ENCODE measurements at regions of chr2 and their contacts with region 1.

Region 1: GRCh38 chr2:28423856-28424605 is 31.4 kb downstream of the FOSL2 start:
- DNase-seq: no peak
- H3K4me3 Mint-ChIP-seq: peak overlapping the region; percentile 34
- H3K27ac Mint-ChIP-seq: peak overlapping the region; percentile 85
- H3K4me1 Mint-ChIP-seq: peaks cover 45% of the 10 kb centered on the region
- H3K27me3 Mint-ChIP-seq: no peaks in the 10 kb centered on the region

Region 2: DNA sequence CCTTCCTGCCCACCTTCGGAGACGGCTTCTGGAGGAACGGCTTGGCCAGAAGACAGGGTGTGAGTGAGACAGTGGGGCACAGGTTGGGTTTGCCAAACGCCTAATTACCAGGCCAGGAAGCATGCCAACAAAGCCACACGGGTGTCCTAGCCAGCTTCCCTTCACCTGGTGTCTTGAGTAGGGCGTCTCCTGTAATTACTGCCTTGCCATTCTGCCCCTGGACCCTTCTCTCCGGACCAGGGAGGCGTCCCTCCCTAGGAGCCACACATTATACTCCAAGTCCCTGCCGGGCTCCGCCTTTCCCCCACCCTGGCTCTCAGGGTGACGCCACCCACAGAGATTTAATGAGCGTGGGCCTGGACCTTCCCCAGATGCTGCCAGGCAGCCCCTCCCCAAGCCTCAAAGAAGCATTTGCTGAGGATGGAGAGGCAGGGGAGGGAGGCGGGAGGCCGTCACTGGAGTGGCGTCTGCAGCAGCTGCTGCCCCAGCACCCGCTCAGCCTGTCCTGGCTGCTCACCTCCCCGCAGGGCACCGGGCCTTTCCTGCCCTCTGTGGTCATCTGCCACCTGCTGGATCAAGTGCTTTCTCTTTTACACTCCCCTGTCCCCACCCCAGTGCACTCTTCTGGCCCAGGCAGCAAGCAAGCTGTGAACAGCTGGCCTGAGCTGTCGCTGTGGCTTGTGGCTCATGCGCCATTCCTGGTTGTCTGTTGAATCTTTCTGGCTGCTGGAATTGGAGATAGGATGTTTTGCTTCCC is 10.7 kb before region 1 on chr2:
- intact Hi-C with region 1: loop called (anchors 1 kb)
- DNase-seq: no peak
- H3K4me3 Mint-ChIP-seq: no peak overlapping the region
- H3K27ac Mint-ChIP-seq: no peak overlapping the region
- H3K4me1 Mint-ChIP-seq: peaks cover 44% of the 10 kb centered on the region
- H3K27me3 Mint-ChIP-seq: no peaks in the 10 kb centered on the region

Region 3: GRCh38 chr2:28434600-28434989 is 10.6 kb after region 1 on chr2:
- intact Hi-C with region 1: loop called (anchors 1 kb)
- DNase-seq: no peak
- H3K4me3 Mint-ChIP-seq: no peak overlapping the region
- H3K27ac Mint-ChIP-seq: no peak overlapping the region
- H3K4me1 Mint-ChIP-seq: peaks cover 54% of the 10 kb centered on the region
- H3K27me3 Mint-ChIP-seq: peaks cover 2% of the 10 kb centered on the region

Region 4: DNA sequence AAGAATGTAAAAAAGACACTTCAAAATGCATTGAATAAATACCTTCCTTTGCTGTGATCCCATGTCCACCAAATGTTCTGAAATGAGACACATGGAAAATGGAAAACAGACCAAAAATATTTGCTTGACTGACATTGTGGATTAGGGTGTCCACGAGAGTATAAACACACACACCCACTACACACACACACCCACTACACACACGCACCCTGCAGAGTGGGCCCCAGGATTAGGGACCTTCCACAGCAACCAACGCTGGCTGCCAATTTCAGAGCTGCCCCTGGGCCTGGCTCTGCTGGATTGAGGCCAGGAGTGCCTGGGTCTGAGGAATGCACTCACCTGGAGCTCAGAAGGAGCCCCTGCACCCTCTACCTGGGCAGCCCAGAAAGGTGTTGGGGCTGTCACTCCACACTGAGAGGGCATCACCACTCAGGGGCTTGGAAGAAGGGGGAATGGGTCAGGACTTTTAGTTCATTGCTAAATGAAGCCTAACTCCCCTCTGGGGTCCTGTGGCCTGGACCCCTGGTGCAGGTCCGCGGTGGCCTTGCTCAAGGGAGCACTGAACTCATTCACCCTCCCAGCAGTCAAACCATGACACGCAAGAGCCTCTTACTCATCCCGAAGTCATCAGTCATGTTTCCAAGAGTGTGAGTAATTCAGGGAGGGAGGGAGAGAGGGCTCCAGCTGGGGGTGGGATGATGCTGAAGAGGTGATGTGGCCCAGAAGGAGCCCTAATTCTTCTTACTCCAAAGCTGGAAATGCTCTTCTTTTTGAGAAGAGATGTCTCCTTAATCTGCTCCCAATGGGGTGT is 21.6 kb after region 1 on chr2:
- intact Hi-C with region 1: loop called (anchors 2 kb)
- DNase-seq: no peak
- H3K4me3 Mint-ChIP-seq: peak overlapping the region; percentile 40
- H3K27ac Mint-ChIP-seq: peak overlapping the region; percentile 82
- H3K4me1 Mint-ChIP-seq: peaks cover 78% of the 10 kb centered on the region
- H3K27me3 Mint-ChIP-seq: no peaks in the 10 kb centered on the region

Measured in activated T-helper 1 cell treated with anti-CD3 and anti-CD28 coated beads, Interleukin-12 subunit alpha, Interleukin-12 subunit beta, Interleukin-2, Interleukin-4 antibody, amounts not matched to agents 30 ng/mL and 10 ng/mL and 1 ng/mL, durations not matched to agents 14 hours and 24 hours and 36 hours (primary cell).